ENCODE measurements at regions of chr19 and their contacts with region 1.

Region 1: GRCh38 chr19:55385740-55386529 is at the start of gene RPL28:
- DNase-seq: peak; percentile 99
- H3K4me3 Mint-ChIP-seq: peak within 1 kb of the TSS; percentile 91
- H3K27ac Mint-ChIP-seq: peak within 1 kb of the TSS; percentile 97
- H3K4me1 Mint-ChIP-seq: peaks cover 49% of the 10 kb centered on the region
- H3K27me3 Mint-ChIP-seq: no peaks in the 10 kb centered on the region
- CTCF ChIP-seq: no peak
- total RNA-seq, gene RPL28: 1,462 and 1,520 TPM in 2 replicates

Region 2: DNA sequence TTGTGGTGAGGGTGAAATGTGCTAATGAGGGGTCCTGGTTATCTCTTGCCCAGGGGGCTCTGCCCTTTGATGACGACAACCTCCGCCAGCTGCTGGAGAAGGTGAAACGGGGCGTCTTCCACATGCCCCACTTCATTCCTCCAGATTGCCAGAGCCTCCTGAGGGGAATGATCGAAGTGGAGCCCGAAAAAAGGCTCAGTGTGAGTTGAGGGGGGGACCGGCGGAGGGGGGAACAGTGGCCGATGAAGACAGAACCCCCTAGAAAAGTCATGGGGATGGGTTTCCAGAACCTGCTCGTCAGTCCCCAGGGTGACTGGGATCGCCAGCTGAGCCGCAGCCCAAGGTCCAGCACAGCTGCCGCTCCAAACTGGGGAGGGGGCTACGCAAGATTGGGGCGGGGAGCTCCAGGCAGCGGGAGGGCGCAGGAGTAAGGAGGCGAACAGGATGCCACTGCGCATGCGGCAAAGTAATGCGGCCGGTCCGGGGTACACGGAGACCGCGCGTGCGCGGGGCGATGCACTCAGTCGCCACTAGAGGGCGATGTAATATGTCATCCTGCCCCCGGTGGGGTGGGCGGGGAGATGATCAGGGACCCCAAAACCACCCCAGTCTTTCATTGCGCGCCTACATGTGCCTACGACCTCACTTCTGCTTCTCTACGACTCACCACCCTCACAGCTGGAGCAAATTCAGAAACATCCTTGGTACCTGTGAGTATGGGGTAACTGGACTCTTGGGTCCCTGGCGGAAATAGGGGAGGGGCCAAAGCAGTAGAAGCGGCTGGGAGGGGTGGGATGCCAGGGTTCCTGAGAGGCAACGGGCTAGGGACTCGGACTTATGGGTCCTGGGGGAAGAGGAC is 84.2 kb before region 1 on chr19:
- CTCF ChIA-PET with region 1: interaction called, 10 read pairs
- intact Hi-C with region 1: loop called (anchors 5 kb)
- DNase-seq: peak; percentile 96
- H3K4me3 Mint-ChIP-seq: peak overlapping the region; percentile 75
- H3K27ac Mint-ChIP-seq: peak overlapping the region; percentile 42
- H3K4me1 Mint-ChIP-seq: peaks cover 10% of the 10 kb centered on the region
- H3K27me3 Mint-ChIP-seq: peaks cover 33% of the 10 kb centered on the region
- CTCF ChIP-seq: peak; percentile 99